Mucosa of descending colon (tissue), 3 donors: ENCODE measurements at regions of chr17 and their contacts with region 1.

Region 1: GRCh38 chr17:56819431-56820145 is 14.1 kb downstream of the C17orf67 start:
- DNase-seq: peak in 2 of 3 donors; percentile 63 to 94
- ATAC-seq: peak; percentile 94
- H3K4me3 ChIP-seq: no peak overlapping the region
- H3K4me1 ChIP-seq: no peaks in the 10 kb centered on the region
- CTCF ChIP-seq: peak; percentile 88

Region 2: GRCh38 chr17:56638591-56639051 is 181.0 kb before region 1 on chr17:
- intact Hi-C with region 1: no loop called
- DNase-seq: no peak
- ATAC-seq: no peak
- H3K4me3 ChIP-seq: no peak overlapping the region
- H3K4me1 ChIP-seq: no peaks in the 10 kb centered on the region
- CTCF ChIP-seq: no peak

Region 3: DNA sequence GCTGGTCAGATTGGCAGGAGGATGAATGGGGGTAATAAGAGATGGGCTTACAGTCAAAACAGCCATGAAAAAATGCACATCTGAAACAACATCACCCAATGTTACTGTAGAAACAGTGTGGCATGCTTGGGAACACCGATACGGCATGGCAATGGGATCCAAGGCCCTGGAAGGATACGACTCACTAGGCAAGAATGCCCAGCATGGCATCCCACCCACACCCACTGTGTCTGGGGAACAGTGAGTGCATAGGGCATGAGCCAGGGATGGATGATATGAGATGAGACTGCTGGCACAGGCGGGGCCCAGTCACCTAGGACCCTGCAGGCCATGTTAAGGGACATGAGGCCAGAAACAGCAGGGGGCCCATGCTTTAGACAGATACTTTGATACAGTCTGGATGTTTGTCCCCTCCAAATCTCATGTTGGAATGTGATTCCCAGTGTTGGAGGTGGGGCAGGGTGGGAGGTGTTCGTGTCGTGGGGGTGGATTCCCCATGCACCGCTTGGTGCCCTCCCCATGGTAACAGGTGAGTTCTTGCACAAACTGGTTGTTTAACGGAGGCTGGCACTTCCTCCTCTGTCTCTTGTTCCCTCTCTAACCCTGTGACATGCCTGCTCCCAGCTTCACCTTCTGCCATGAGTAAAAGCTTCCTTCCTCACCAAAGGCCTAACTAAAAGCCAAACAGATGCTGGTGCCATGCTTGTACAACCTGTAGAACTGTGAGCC is 82.9 kb after region 1 on chr17:
- intact Hi-C with region 1: no loop called
- DNase-seq: no peak
- ATAC-seq: no peak
- H3K4me3 ChIP-seq: no peak overlapping the region
- H3K4me1 ChIP-seq: no peaks in the 10 kb centered on the region
- CTCF ChIP-seq: no peak

Region 4: DNA sequence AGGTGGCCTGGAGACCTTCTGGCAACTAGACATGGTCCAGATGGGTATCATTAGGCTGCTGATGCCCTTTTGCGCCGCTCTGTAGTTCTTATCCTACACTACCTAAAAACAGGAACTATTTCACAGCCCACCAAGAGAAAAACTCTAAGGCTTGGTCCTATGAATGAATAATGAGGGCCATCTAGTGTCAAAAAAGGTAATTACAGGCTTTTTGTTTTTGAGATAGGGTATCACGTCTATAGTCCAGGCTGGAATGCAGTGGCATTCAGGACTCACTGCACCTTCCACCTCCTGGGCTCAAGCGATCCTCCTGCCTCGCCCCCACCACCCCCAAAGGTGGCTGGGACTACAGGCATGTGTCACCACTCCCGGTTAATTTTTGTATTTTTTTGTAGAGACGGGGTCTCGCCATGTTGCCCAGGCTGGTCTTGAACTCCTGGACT is 120.3 kb after region 1 on chr17:
- intact Hi-C with region 1: loop called (anchors 5 kb)
- DNase-seq: no peak
- ATAC-seq: peak; percentile 58
- H3K4me3 ChIP-seq: no peak overlapping the region
- H3K4me1 ChIP-seq: no peaks in the 10 kb centered on the region
- CTCF ChIP-seq: no peak